ENCODE measurements at regions of chr11 and their contacts with region 1.

Region 1: GRCh38 chr11:118715245-118715831 is 35.9 kb upstream of the TREH start:
- DNase-seq: peak in 1 of 2 experiments; percentile 51
- H3K4me3 ChIP-seq: peak overlapping the region in 1 of 4 experiments; percentile 27; a peak in 1 of 8 replicates
- H3K27ac ChIP-seq: peak overlapping the region; percentile 95
- H3K4me1 ChIP-seq: peaks cover 4 to 15% (median 8%) of the 10 kb centered on the region in 4 experiments
- H3K27me3 ChIP-seq: no peaks in the 10 kb centered on the region
- CTCF ChIP-seq: no peak
- EP300 ChIP-seq: no peak
- POLR2A ChIP-seq: peak in 1 of 2 experiments; percentile 41; a peak in 1 of 3 replicates
- RAD21 ChIP-seq: no peak

Region 2: DNA sequence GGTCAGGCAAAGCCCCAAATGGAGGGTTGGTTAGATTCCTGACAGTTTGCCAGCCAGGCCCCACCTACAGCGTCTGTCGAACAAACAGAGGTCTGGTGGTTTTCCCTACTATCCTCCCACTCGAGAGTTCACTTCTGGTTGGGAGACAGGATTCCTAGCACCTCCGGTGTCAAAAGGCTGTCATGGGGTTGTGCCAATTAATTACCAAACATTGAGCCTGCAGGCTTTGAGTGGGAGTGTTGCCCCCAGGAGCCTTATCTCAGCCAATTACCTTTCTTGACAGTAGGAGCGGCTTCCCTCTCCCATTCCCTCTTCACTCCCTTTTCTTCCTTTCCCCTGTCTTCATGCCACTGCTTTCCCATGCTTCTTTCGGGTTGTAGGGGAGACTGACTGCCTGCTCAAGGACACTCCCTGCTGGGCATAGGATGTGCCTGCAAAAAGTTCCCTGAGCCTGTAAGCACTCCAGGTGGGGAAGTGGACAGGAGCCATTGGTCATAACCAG is 192.7 kb before region 1 on chr11:
- CTCF ChIA-PET with region 1: no interaction called
- POLR2A ChIA-PET with region 1: no interaction called
- DNase-seq: no peak
- H3K4me3 ChIP-seq: no peak overlapping the region
- H3K27ac ChIP-seq: no peak overlapping the region
- H3K4me1 ChIP-seq: no peaks in the 10 kb centered on the region
- H3K27me3 ChIP-seq: no peaks in the 10 kb centered on the region
- CTCF ChIP-seq: peak; percentile 38 to 58 (median 51)
- EP300 ChIP-seq: no peak
- POLR2A ChIP-seq: no peak
- RAD21 ChIP-seq: peak; percentile 39 to 47; a peak in 3 of 4 replicates

Region 3: GRCh38 chr11:118699506-118700220 is 15.7 kb before region 1 on chr11:
- CTCF ChIA-PET with region 1: interaction called, 8 read pairs
- POLR2A ChIA-PET with region 1: interaction called, 46 read pairs
- DNase-seq: no peak
- H3K4me3 ChIP-seq: no peak overlapping the region
- H3K27ac ChIP-seq: no peak overlapping the region
- H3K4me1 ChIP-seq: peaks cover 0 to 11% (median 6%) of the 10 kb centered on the region in 4 experiments; a peak in 5 of 7 replicates
- H3K27me3 ChIP-seq: no peaks in the 10 kb centered on the region
- CTCF ChIP-seq: no peak
- EP300 ChIP-seq: no peak
- POLR2A ChIP-seq: no peak
- RAD21 ChIP-seq: no peak

Region 4: GRCh38 chr11:118744046-118744445 is 28.7 kb after region 1 on chr11:
- CTCF ChIA-PET with region 1: interaction called, 3 read pairs
- POLR2A ChIA-PET with region 1: interaction called, 14 read pairs
- DNase-seq: no peak
- H3K4me3 ChIP-seq: no peak overlapping the region
- H3K27ac ChIP-seq: no peak overlapping the region
- H3K4me1 ChIP-seq: peaks cover 0 to 8% (median 4%) of the 10 kb centered on the region in 4 experiments; a peak in 3 of 7 replicates
- H3K27me3 ChIP-seq: no peaks in the 10 kb centered on the region
- CTCF ChIP-seq: no peak
- EP300 ChIP-seq: no peak
- POLR2A ChIP-seq: no peak
- RAD21 ChIP-seq: no peak

Region 5: GRCh38 chr11:118807800-118808778 is 92.8 kb after region 1 on chr11:
- CTCF ChIA-PET with region 1: no interaction called
- POLR2A ChIA-PET with region 1: no interaction called
- DNase-seq: no peak
- H3K4me3 ChIP-seq: no peak overlapping the region
- H3K27ac ChIP-seq: no peak overlapping the region
- H3K4me1 ChIP-seq: no peaks in the 10 kb centered on the region
- H3K27me3 ChIP-seq: no peaks in the 10 kb centered on the region
- CTCF ChIP-seq: no peak
- EP300 ChIP-seq: no peak
- POLR2A ChIP-seq: no peak
- RAD21 ChIP-seq: no peak

Region 6: DNA sequence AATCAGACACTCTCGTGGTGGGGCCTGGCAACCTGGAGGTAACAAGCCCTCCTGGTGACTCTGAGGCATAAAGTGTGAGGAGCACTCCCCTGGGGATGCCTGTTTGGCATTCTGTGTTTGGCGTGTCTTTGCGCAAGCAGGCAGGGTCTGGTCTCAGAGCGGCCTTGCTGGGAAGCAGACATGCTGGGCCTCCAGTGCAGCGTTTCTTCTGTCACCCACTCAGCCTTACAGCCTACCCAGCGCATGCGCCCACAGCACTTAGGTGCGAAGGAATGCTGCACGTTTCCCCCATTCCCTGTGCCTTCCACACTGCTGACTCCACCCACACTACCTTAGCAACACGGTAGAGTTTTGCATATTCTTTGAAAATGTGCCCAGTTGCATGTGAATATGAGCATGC is 160.9 kb after region 1 on chr11:
- CTCF ChIA-PET with region 1: no interaction called
- POLR2A ChIA-PET with region 1: no interaction called
- DNase-seq: no peak
- H3K4me3 ChIP-seq: no peak overlapping the region
- H3K27ac ChIP-seq: no peak overlapping the region
- H3K4me1 ChIP-seq: no peaks in the 10 kb centered on the region; a peak in 2 of 7 replicates
- H3K27me3 ChIP-seq: no peaks in the 10 kb centered on the region
- CTCF ChIP-seq: no peak
- EP300 ChIP-seq: no peak
- POLR2A ChIP-seq: no peak
- RAD21 ChIP-seq: no peak